ENCODE measurements at regions of chr1 and their contacts with region 1.

Region 1: GRCh38 chr1:12078938-12079861 is 16.1 kb downstream of the TNFRSF8 start:
- DNase-seq: peak in 1 of 2 experiments; percentile 86
- H3K4me3 ChIP-seq: peak overlapping the region in 3 of 4 experiments; percentile 18 to 44 (median 34); a peak in 5 of 8 replicates
- H3K27ac ChIP-seq: no peak overlapping the region; the same call in 1 of the 2 replicates
- H3K4me1 ChIP-seq: peaks cover 3 to 22% (median 6%) of the 10 kb centered on the region in 4 experiments
- H3K27me3 ChIP-seq: no peaks in the 10 kb centered on the region
- CTCF ChIP-seq: peak; percentile 73 to 90 (median 80)
- EP300 ChIP-seq: no peak
- POLR2A ChIP-seq: peak in 1 of 2 experiments; percentile 33; a peak in 2 of 3 replicates
- RAD21 ChIP-seq: peak; percentile 57 to 70

Region 2: GRCh38 chr1:12019858-12020509 is 59.2 kb before region 1 on chr1:
- CTCF ChIA-PET with region 1: interaction called, 3 read pairs
- POLR2A ChIA-PET with region 1: interaction called, 10 read pairs
- DNase-seq: no peak
- H3K4me3 ChIP-seq: peak overlapping the region; percentile 72 to 94 (median 77)
- H3K27ac ChIP-seq: peak overlapping the region; percentile 77; the same call in 1 of the 2 replicates
- H3K4me1 ChIP-seq: peaks cover 0 to 7% (median 0%) of the 10 kb centered on the region in 4 experiments; a peak in 4 of 7 replicates
- H3K27me3 ChIP-seq: no peaks in the 10 kb centered on the region
- CTCF ChIP-seq: no peak
- EP300 ChIP-seq: no peak
- POLR2A ChIP-seq: no peak
- RAD21 ChIP-seq: no peak

Region 3: DNA sequence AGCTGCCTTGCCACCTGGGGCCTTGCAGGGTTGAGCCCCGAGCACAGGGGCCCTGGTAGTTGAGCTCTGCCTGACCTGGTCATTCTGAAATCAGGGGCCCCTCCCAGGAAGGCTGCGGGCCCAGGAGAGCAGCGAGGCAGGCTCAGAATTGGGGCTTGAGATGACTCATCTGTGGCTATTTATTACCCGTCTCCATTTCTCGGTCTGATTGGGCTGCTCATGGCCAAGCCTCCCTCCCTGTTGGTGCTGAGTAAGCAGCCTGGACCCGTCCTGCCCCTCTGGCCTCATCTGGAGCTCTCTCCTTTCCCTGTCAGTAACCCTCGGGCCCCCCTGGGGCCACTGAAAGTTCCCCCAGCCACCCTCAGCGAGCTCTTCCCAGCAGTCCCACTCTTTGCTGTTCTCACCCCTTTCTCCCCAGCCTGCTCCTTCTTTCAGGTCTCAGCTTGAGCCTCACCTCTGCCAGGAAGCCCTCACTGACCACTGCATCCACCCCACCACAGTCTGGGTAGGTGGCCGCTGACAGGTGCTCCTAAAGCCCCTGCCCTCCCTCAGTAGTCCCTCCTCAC is 27.1 kb before region 1 on chr1:
- CTCF ChIA-PET with region 1: interaction called, 23 read pairs
- POLR2A ChIA-PET with region 1: interaction called, 6 read pairs
- DNase-seq: no peak
- H3K4me3 ChIP-seq: no peak overlapping the region
- H3K27ac ChIP-seq: no peak overlapping the region
- H3K4me1 ChIP-seq: peaks cover 0 to 13% (median 4%) of the 10 kb centered on the region in 4 experiments; a peak in 5 of 7 replicates
- H3K27me3 ChIP-seq: no peaks in the 10 kb centered on the region; a peak in 1 of 7 replicates
- CTCF ChIP-seq: no peak
- EP300 ChIP-seq: no peak
- POLR2A ChIP-seq: no peak
- RAD21 ChIP-seq: no peak

Region 4: DNA sequence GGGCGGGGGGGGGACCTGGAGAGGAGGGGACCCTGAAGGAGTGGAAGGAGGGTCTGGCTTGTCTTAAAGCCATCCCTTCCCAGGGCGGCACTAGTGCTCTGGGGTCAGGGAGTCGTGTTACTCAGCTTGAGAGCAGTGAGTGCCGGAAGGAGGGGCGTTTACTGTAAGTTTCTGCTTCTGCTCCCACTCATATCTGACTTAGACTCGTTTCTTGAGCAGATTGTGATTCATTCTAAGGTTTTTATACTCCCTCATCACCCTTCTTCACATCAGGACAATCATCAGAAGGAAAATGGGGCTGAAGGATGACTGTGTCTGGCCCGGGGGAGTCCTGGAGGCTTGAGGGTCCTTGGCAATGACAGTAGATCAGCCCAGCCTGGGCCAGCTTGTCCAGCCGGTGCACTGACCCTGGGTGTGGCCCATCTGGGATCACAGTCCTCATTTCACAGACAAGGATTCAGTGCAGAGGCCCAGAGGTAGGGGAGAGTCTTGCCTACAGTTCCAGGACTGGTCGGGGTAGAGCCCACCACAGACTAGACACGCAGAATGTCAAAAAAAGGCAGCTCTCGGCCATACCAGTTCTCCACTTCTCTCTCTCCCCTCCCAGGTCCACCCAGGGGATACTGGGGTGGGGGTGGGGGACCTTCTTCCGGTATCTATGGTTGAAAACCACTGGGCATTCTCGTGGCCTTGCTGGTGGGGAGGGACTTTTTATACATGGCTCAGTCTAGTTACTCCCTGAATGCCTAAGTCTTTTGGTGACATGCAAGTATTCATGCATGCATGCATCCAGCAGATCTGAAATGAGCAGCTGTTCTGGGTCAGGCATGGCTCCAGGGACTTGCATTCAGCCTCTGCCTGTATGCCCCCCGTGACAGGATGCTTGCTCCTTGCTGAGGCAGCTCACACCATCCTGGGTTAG is 11.0 kb before region 1 on chr1:
- CTCF ChIA-PET with region 1: interaction called, 59 read pairs
- POLR2A ChIA-PET with region 1: interaction called, 9 read pairs
- DNase-seq: peak; percentile 62 to 64
- H3K4me3 ChIP-seq: 0 out of 8 replicates have a peak overlapping the region, but pooled peaks of 2 of the 4 experiments have one; percentile 14 to 31
- H3K27ac ChIP-seq: no peak overlapping the region
- H3K4me1 ChIP-seq: peaks cover 21 to 39% (median 26%) of the 10 kb centered on the region in 4 experiments
- H3K27me3 ChIP-seq: peaks cover 0 to 16% (median 6%) of the 10 kb centered on the region in 4 experiments; a peak in 4 of 7 replicates
- CTCF ChIP-seq: no peak
- EP300 ChIP-seq: no peak
- POLR2A ChIP-seq: no peak
- RAD21 ChIP-seq: no peak

Region 5: GRCh38 chr1:12166834-12167492 is 87.8 kb after region 1 on chr1 and contains the start of gene TNFRSF1B:
- CTCF ChIA-PET with region 1: no interaction called
- POLR2A ChIA-PET with region 1: no interaction called
- DNase-seq: peak in 1 of 2 experiments; percentile 85
- H3K4me3 ChIP-seq: peak within 1 kb of the TSS; percentile 5 to 55 (median 21); a peak in 5 of 8 replicates
- H3K27ac ChIP-seq: no peak within 1 kb of the TSS
- H3K4me1 ChIP-seq: peaks cover 0 to 10% (median 5%) of the 10 kb centered on the region in 4 experiments; a peak in 5 of 7 replicates
- H3K27me3 ChIP-seq: peaks cover 3 to 41% (median 29%) of the 10 kb centered on the region in 4 experiments
- CTCF ChIP-seq: no peak
- EP300 ChIP-seq: no peak
- POLR2A ChIP-seq: peak in 1 of 2 experiments; percentile 43; a peak in 1 of 3 replicates
- RAD21 ChIP-seq: no peak
- total RNA-seq, gene TNFRSF1B: 2.8 and 2.9 TPM in 2 replicates

Measured in H1 (cell line).